Activated CD8-positive, alpha-beta memory T cell treated with anti-CD3 and anti-CD28 coated beads, Interleukin-2, amount 10 ng/mL, durations not matched to agents 7 days and 5 days (primary cell): ENCODE measurements at regions of chr19 and their contacts with region 1.

Region 1: GRCh38 chr19:13093407-13094105 is 9.1 kb downstream of the LYL1 start:
- DNase-seq: peak; percentile 85
- ATAC-seq: peak; percentile 86
- H3K4me3 Mint-ChIP-seq: no peak overlapping the region
- H3K27ac Mint-ChIP-seq: no peak overlapping the region
- H3K4me1 Mint-ChIP-seq: peaks cover 12% of the 10 kb centered on the region
- H3K27me3 Mint-ChIP-seq: peaks cover 42% of the 10 kb centered on the region

Region 2: DNA sequence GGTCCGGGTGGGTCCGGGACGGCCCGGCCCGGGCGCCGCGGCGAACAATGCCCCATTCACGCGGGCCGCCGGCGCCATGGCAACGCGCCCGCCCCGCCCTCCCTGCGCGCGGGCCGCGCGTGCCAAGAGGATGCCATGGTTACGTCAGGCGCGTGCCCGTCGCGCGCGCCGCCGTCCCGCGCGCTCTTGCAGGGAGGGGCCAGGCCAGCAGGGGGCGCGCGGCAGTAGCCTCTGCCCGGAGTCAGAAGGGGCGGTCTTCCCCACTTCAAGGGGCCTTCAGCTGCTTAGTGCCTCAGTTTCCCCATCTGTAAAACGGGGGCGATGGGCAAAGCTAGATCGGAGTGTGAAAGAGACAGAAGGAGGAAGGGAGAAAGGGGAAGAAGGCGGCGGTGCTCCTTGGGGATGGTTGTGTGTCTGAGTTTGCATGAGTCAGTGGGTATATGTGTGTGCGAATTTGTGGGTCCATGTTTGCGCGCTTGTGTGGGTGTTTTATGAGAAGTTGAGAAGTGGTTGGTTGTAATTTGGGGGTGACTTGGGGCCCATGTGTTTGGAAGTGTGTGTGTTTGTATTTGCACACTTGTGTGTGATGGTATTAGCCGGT is 109.9 kb before region 1 on chr19:
- CTCF ChIA-PET with region 1: interaction called, 178 read pairs
- DNase-seq: peak; percentile 77
- ATAC-seq: peak; percentile 77
- H3K4me3 Mint-ChIP-seq: no peak overlapping the region
- H3K27ac Mint-ChIP-seq: no peak overlapping the region
- H3K4me1 Mint-ChIP-seq: peaks cover 2% of the 10 kb centered on the region
- H3K27me3 Mint-ChIP-seq: peaks cover 7% of the 10 kb centered on the region

Region 3: GRCh38 chr19:13012690-13013608 is 80.6 kb before region 1 on chr19:
- CTCF ChIA-PET with region 1: interaction called, 19 read pairs
- DNase-seq: peak; percentile 51
- ATAC-seq: peak; percentile 33
- H3K4me3 Mint-ChIP-seq: peak overlapping the region; percentile 38
- H3K27ac Mint-ChIP-seq: peak overlapping the region; percentile 58
- H3K4me1 Mint-ChIP-seq: peaks cover 11% of the 10 kb centered on the region
- H3K27me3 Mint-ChIP-seq: peaks cover 84% of the 10 kb centered on the region

Region 4: DNA sequence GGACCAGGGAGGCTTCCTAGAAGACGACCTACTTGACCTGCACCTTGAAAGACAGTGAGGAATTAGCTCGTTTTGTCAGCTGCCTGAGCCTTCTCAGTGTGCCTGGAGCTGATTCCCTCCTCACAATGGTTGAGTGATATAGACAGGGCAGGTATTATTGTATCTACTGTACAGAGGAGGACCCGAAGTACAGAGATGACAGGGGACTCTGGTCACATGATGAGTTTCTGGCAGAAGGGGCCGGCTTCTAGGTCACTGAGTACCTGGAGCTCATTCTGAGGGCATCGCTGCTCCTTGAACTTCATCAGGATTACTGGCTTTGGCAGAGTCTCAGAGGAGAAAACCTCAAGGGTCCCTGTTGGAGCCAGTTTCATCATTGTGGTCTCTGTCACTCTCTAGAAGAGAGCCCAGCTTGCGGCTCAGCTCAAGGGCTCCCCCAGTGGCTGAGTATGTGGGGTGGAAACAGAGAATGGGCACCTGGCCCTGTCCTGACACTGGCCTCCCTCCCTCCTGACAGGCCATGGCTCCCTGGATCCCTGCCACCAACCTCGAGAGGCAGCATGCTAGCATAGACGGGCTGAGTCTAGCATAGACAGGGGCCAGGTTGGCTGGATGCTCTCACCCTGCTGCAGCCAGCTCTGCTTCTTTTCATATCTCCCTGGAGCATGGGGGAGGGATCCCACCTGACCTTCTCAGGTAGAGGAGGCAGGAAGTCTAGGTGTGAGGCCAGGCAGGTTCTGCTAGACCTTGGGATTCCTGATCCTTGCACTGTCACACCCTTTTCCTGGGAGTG is 59.5 kb before region 1 on chr19:
- CTCF ChIA-PET with region 1: interaction called, 14 read pairs
- DNase-seq: peak; percentile 63
- ATAC-seq: peak; percentile 73
- H3K4me3 Mint-ChIP-seq: no peak overlapping the region
- H3K27ac Mint-ChIP-seq: no peak overlapping the region
- H3K4me1 Mint-ChIP-seq: peaks cover 16% of the 10 kb centered on the region
- H3K27me3 Mint-ChIP-seq: peaks cover 11% of the 10 kb centered on the region

Region 5: DNA sequence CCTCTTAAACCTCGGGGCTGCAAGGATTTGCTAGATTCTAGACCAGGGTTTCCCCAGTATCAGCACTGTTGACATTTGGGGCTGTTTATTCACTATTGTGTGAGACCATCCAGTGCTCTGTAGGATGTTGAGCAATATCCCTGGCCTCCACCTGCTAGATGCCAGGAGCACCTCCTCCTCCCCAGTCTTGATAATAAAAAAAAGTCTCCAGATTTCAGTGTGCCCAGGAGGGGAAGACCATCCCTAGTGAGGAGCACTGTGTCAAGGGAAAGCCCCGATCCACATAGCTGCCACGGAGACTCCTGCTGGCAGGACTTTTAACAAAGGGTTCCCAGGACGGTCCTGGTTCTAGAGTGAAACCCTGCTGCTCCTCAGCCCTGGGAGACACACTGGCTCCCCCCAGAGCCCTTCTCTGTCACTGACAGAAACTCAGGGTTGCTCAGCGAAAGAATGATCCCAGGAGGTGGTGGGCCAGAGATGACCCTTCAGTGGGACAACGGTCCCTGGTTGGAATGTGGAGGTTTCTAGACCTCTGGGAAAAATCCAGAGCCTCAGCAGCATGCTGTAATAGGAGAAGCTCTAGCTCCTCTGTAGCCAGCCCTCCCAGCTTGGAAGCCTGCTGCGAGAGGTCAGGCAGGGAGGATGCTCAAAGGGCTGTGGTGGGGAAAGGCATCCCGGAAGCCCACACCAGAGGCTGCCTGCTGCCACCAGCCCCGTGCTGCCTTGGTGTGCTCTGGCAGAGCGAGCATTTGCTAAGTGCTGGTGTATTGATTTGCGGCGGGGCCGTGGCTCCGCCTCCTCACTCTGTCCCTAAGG is 11.2 kb before region 1 on chr19:
- CTCF ChIA-PET with region 1: interaction called, 21 read pairs
- DNase-seq: no peak
- ATAC-seq: no peak
- H3K4me3 Mint-ChIP-seq: no peak overlapping the region
- H3K27ac Mint-ChIP-seq: no peak overlapping the region
- H3K4me1 Mint-ChIP-seq: no peaks in the 10 kb centered on the region
- H3K27me3 Mint-ChIP-seq: peaks cover 2% of the 10 kb centered on the region

Region 6: GRCh38 chr19:13104360-13104847 is 10.8 kb after region 1 on chr19:
- CTCF ChIA-PET with region 1: interaction called, 14 read pairs
- DNase-seq: peak; percentile 72
- ATAC-seq: peak; percentile 38
- H3K4me3 Mint-ChIP-seq: peak overlapping the region; percentile 78
- H3K27ac Mint-ChIP-seq: peak overlapping the region; percentile 83
- H3K4me1 Mint-ChIP-seq: peaks cover 30% of the 10 kb centered on the region
- H3K27me3 Mint-ChIP-seq: peaks cover 5% of the 10 kb centered on the region